Activated CD8-positive, alpha-beta memory T cell treated with anti-CD3 and anti-CD28 coated beads, Interleukin-2, amount 10 ng/mL, durations not matched to agents 7 days and 5 days (primary cell): ENCODE measurements at regions of chr12 and their contacts with region 1.

Region 1: DNA sequence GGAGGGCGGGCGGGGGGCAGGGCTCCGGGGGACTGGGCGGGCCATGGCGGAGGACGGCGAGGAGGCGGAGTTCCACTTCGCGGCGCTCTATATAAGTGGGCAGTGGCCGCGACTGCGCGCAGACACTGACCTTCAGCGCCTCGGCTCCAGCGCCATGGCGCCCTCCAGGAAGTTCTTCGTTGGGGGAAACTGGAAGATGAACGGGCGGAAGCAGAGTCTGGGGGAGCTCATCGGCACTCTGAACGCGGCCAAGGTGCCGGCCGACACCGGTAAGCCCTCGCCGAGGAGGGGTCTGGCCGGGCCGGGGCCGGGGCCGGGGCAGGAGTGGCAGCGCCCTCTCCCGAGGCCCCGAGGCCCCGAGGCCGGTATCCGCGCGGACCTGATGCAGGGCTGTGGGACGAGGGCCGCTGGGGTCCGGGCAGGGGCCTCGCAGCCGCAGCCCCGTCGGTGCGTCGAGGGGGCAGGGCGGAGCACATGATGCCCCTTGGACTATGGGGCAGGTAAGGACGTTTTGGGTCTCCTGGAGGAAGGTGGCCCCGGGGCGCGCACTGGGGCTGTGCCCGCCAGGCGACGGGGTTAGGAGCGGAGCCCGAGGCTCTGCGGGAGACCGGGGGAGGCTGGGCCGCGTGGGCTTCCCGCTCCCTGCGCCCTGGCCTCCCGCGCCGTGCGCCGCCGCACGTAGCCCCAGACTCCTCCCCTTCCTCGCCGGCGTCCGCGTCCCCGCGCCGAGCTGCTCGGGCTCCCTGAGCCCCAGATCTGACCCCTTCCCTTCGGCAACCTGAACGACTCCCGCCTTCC is at the start of gene TPI1:
- DNase-seq: peak; percentile 87
- ATAC-seq: peak; percentile 71
- H3K4me3 Mint-ChIP-seq: peak within 1 kb of the TSS; percentile 98
- H3K27ac Mint-ChIP-seq: peak within 1 kb of the TSS; percentile 90
- H3K4me1 Mint-ChIP-seq: peaks cover 47% of the 10 kb centered on the region
- H3K27me3 Mint-ChIP-seq: no peaks in the 10 kb centered on the region
- total RNA-seq, gene TPI1: 1,086 to 1,277 TPM

Region 2: GRCh38 chr12:6752921-6753771 is 114.5 kb before region 1 on chr12 and contains the start of gene MLF2:
- CTCF ChIA-PET with region 1: interaction called, 12 read pairs
- DNase-seq: peak; percentile 99
- ATAC-seq: peak; percentile 92
- H3K4me3 Mint-ChIP-seq: peak within 1 kb of the TSS; percentile 90
- H3K27ac Mint-ChIP-seq: peak within 1 kb of the TSS; percentile 98
- H3K4me1 Mint-ChIP-seq: peaks cover 25% of the 10 kb centered on the region
- H3K27me3 Mint-ChIP-seq: peaks cover 2% of the 10 kb centered on the region
- total RNA-seq, gene MLF2: 102 to 113 TPM

Region 3: GRCh38 chr12:6851921-6852650 is 15.5 kb before region 1 on chr12 and contains the start of gene USP5:
- CTCF ChIA-PET with region 1: interaction called, 65 read pairs
- DNase-seq: peak; percentile 100
- ATAC-seq: peak; percentile 82
- H3K4me3 Mint-ChIP-seq: peak within 1 kb of the TSS; percentile 85
- H3K27ac Mint-ChIP-seq: peak within 1 kb of the TSS; percentile 100
- H3K4me1 Mint-ChIP-seq: peaks cover 45% of the 10 kb centered on the region
- H3K27me3 Mint-ChIP-seq: no peaks in the 10 kb centered on the region
- total RNA-seq, gene USP5: 98.8 to 129 TPM

Region 4: DNA sequence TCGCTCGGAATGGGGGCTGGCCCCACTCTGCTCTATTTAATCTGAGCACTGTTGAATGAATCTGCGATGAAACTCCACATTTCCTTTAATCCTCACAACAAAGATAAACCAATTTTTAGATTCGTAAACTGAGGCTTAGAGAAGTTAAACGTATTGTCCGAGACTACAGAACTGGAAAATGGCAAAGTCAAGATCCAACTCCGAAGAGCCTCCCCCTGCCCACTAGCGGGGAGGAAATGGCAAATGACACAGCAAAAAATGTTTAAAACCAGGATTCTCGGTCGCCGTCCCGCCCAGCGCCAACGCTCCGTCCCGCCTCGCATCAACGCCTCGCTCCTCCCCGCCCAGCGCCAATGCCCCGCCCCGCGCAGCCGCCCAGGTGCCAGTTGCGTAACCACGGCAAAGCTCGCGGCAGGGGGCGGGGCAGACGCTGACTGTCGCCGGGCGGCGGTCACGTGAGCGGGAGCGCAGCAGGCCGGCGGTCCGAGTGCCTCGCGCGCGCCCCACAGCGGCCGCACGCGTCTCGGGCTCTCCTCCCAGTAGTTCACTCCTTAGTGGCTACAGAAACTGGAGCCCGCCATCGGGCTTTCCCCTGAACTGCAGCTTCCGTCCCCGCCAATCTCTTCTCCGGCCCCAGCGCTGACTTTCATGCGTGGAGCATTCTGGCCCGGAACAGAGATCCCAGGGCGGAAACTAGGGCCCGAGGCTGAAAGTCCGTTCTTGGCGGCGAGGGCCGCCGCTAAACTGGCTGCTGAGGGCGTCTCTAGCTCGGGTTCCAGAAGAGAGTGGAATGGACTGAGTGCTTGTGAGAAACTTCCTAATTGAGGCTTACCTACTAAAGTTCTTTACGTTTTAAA is 23.4 kb after region 1 on chr12:
- CTCF ChIA-PET with region 1: interaction called, 90 read pairs
- DNase-seq: peak; percentile 99
- ATAC-seq: peak; percentile 95
- H3K4me3 Mint-ChIP-seq: peak overlapping the region; percentile 80
- H3K27ac Mint-ChIP-seq: peak overlapping the region; percentile 93
- H3K4me1 Mint-ChIP-seq: peaks cover 29% of the 10 kb centered on the region
- H3K27me3 Mint-ChIP-seq: no peaks in the 10 kb centered on the region

Region 5: DNA sequence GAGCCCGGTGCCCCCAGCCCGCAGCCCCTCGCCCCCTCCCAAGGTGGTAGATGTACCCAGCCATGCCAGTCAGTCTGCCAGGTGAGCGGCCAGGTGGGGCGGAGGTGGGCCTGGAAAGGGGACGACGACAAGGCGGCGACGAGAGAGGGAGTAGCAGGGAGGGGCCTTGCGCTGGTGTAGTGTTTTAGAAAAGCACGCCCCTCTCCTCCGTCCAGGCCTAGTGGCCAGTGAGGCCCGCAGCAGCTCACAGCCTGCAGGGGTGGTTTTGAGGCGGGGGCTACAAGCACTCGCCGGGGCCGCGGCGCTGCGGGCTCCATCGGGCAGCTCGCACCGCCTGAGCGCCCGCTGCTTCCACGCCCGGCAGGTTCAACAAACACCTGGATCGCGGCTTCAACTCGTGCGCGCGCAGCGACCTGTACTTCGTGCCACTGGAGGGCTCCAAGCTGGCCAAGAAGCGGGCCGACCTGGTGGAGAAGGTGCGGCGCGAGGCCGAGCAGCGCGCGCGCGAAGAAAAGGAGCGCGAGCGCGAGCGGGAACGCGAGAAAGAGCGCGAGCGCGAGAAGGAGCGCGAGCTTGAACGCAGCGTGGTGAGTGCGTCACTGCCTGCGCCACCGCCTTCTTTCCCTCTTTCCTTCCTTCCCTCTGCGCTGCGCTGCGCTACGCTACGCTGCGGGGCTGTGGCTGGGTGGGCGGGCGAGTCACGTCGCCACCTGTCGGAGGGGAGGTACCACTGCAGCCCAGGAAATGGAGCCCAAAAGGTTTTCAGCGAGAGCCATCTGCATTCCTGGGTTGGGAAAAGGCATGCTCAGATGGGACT is 70.1 kb after region 1 on chr12:
- CTCF ChIA-PET with region 1: interaction called, 36 read pairs
- DNase-seq: peak; percentile 97
- ATAC-seq: peak; percentile 94
- H3K4me3 Mint-ChIP-seq: peak overlapping the region; percentile 87
- H3K27ac Mint-ChIP-seq: peak overlapping the region; percentile 96
- H3K4me1 Mint-ChIP-seq: peaks cover 45% of the 10 kb centered on the region
- H3K27me3 Mint-ChIP-seq: no peaks in the 10 kb centered on the region

Region 6: DNA sequence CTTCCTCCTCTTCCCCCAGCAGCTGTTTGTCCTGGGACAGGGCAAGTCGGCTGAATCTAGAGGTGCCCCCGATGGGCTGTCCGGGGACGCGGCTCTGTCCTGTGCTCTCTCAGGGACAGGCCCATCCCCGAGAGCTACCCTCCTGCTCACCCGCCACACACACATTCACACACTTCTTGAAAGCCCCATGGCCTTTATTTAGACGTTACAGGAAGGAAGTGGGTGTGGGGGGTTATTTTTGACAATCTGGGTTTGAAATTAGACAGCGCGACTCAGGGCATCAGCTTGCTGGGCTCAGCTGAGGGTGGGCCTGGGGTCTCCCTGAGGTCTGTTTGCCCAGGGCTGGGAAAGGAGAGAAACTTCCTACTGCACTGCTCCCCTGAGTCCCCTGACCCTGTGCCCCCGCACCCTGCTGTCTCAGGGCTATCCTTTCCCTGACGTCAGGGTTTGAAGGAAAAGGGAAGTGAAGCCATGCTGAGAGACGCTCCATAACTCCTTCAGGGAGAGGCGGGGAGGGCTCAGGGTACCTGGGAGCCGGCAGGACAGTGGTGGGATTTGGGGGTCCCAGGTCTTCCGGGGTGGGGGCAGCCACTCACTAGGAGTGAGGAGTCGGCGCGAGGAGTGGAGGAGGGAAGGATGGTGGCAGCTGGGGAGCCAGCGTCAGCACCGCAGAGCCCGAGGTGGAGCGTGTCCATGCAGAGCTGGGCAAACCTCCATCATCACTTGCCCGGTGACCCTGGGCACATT is 91.6 kb after region 1 on chr12:
- CTCF ChIA-PET with region 1: interaction called, 13 read pairs
- DNase-seq: peak; percentile 87
- ATAC-seq: peak; percentile 61
- H3K4me3 Mint-ChIP-seq: peak overlapping the region; percentile 79
- H3K27ac Mint-ChIP-seq: peak overlapping the region; percentile 96
- H3K4me1 Mint-ChIP-seq: peaks cover 84% of the 10 kb centered on the region
- H3K27me3 Mint-ChIP-seq: no peaks in the 10 kb centered on the region